ENCODE measurements at regions of chr1 and their contacts with region 1.

Region 1: DNA sequence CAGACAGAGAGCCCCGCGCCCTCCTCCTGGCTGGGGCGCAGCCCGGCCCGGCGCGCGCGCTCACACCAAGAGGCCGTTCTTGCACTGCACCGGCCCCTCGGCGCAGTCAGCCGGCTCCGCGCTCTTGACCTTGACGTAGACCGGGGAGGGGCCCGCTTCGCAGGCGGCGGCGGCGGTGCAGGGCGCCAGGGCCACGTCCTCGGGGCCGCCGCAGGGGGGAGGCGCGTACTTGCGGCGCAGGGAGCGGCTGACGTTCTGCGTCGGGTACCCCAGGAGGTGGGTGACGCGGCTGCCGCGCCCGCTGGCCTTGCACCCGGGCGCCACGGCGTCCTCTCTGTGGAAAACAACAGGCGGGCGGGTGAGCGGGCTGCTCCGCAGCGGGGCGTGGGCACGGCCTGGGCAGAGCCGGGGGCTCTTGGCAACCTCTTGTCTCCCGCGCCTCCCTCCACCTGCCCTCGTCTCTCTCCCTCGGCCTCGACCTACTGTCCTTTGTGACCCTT is 7.7 kb downstream of the VSIG8 start:
- DNase-seq: peak; percentile 68 to 88 (median 76)
- H3K4me3 ChIP-seq: peak overlapping the region; percentile 60 to 84 (median 68)
- H3K27ac ChIP-seq: peak overlapping the region in 1 of 2 experiments; percentile 47
- H3K4me1 ChIP-seq: peaks cover 2 to 20% (median 14%) of the 10 kb centered on the region in 4 experiments
- H3K27me3 ChIP-seq: no peaks in the 10 kb centered on the region

Region 2: GRCh38 chr1:159872881-159873280 is 18.1 kb after region 1 on chr1:
- CTCF ChIA-PET with region 1: interaction called, 10 read pairs
- POLR2A ChIA-PET with region 1: interaction called, 3 read pairs
- DNase-seq: no peak
- H3K4me3 ChIP-seq: no peak overlapping the region
- H3K27ac ChIP-seq: no peak overlapping the region
- H3K4me1 ChIP-seq: peaks cover 0 to 16% (median 8%) of the 10 kb centered on the region in 4 experiments
- H3K27me3 ChIP-seq: no peaks in the 10 kb centered on the region

Region 3: GRCh38 chr1:159945483-159946241 is 90.9 kb after region 1 on chr1 and contains the start of gene IGSF9:
- CTCF ChIA-PET with region 1: no interaction called
- POLR2A ChIA-PET with region 1: no interaction called
- DNase-seq: peak; percentile 89 to 93 (median 92)
- H3K4me3 ChIP-seq: peak within 1 kb of the TSS; percentile 8 to 73 (median 48)
- H3K27ac ChIP-seq: no peak within 1 kb of the TSS
- H3K4me1 ChIP-seq: peaks cover 0 to 27% (median 11%) of the 10 kb centered on the region in 4 experiments
- H3K27me3 ChIP-seq: peaks cover 0 to 25% (median 0%) of the 10 kb centered on the region in 5 experiments

Measured in common myeloid progenitor, CD34-positive (primary cell).